PC-3 (cell line): ENCODE measurements at regions of chr5 and their contacts with region 1.

Region 1: GRCh38 chr5:31581498-31582099 is 49.5 kb downstream of the C5orf22 start:
- DNase-seq: peak; percentile 65
- ATAC-seq: no peak
- H3K4me3 ChIP-seq: no peak overlapping the region
- H3K27ac ChIP-seq: no peak overlapping the region
- H3K4me1 ChIP-seq: no peaks in the 10 kb centered on the region
- H3K27me3 ChIP-seq: peaks cover 19% of the 10 kb centered on the region; the same call in 1 of the 2 replicates
- CTCF ChIP-seq: peak; percentile 77

Region 2: DNA sequence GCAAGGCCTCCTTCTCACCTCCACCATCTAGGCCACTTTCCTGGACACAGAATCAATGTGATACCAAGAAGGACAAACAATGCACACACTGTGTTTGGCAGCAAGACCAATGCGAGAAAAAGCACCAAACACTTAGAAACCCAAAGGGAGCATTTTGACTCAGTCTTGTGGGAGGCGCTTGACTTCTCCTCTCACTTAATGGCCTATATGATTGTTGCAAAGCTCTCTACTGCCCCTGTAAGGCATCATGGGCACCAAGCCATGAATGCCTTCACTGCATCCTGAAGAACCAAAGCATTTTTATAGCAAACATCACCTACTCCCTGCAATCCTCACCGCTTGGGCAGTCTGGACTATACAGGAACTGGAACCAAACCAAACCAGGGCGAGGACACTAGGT is 330.6 kb before region 1 on chr5:
- CTCF ChIA-PET with region 1: no interaction called
- POLR2A ChIA-PET with region 1: no interaction called
- intact Hi-C with region 1: no loop called
- DNase-seq: no peak
- ATAC-seq: no peak
- H3K4me3 ChIP-seq: no peak overlapping the region
- H3K27ac ChIP-seq: no peak overlapping the region
- H3K4me1 ChIP-seq: no peaks in the 10 kb centered on the region
- H3K27me3 ChIP-seq: 0 out of 2 replicates have a peak, but pooled peaks cover 16% of the 10 kb centered on the region
- CTCF ChIP-seq: peak; percentile 25; the same call in 1 of the 2 replicates

Region 3: DNA sequence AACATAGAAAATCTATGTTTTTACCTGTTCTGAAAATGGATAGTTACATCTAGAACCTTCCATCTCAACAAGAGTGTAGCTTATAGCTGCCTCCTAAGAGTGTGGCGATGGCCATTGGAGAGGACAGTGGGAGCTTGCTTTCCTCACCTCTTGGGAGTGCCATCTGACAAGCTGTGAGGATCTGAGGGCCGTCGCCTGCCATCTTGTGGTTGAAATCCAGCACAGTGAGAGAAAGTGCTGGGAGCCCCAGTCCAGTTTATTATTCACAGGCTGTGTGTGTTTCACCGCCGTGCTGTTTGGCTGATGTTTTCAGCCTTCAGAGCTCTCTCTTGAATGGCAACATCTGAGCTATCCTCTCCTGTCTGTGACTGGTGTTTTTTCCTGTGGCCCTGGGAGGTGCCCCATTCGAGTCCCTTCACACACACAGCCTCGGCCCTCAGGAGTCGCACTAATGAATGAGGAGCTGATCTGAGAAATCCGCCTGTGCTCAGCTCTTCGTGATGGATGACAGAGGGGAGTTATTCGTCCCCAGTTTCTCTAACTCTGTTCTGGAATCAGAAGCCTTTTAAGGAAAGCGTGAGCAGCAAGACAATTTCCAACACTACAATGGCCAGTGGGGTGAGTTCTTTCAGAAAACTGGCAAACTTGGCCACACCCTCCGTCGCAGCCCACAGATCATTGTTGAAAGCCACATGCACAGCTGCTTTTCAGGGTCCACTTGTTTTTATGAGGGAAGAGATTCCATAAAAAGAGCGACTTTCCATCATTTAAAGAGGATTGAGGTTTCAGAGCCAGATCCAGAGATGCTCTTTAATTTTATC is 227.7 kb after region 1 on chr5:
- CTCF ChIA-PET with region 1: interaction called, 4 read pairs
- POLR2A ChIA-PET with region 1: no interaction called
- intact Hi-C with region 1: loop called (anchors 1 kb)
- DNase-seq: peak; percentile 84
- ATAC-seq: peak; percentile 98
- H3K4me3 ChIP-seq: no peak overlapping the region
- H3K27ac ChIP-seq: no peak overlapping the region
- H3K4me1 ChIP-seq: peaks cover 3% of the 10 kb centered on the region; the same call in 1 of the 2 replicates
- H3K27me3 ChIP-seq: peaks cover 24% of the 10 kb centered on the region
- CTCF ChIP-seq: peak; percentile 91

Region 4: DNA sequence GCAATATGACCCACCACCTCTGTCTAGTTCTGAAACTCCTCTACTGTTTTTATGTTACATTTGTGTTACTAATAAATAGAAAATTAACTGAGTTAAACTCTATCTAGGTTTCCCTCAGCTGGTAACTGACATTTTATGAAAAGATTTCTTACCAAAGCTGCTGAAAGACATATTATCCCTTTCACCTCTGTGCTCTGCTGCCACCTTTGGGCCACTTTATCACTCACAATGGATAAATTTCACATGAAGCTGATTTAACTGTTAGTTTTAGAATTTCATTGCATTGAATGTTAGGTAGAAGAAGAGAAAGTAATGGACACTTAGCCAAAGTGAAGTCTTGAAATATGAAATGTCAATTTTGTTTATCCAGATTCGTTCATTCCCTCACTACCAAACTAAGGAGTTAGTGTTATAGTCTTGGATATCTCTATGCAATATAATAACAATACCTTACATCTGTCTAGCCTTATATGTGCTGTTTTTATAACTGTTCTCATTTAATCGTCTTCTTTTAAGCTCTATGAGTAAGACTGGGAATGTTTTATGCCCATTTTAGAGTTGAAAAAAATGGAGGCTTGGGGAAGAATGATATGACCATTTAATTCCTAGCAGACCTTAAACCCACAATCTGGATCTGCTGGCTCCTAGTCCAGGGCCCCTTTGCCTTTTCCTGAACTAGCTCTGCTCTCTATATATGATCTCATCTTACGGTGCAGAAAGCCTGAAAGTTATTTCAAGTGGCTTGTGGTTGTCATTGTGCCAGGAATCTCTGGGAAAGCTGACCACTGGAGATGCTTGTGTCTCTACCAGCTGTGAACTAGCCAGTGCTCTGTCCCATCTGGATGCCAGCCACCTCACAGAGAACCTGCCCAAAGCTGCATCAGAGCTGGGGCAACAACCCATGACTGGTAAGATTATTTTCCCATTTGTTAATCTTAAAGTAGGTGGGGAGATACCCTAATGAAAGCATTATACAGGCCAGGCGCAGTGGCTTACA is 495.4 kb after region 1 on chr5:
- CTCF ChIA-PET with region 1: no interaction called
- POLR2A ChIA-PET with region 1: no interaction called
- intact Hi-C with region 1: loop called (anchors 5 kb)
- DNase-seq: peak; percentile 80
- ATAC-seq: peak; percentile 50
- H3K4me3 ChIP-seq: no peak overlapping the region
- H3K27ac ChIP-seq: no peak overlapping the region
- H3K4me1 ChIP-seq: peaks cover 2% of the 10 kb centered on the region
- H3K27me3 ChIP-seq: no peaks in the 10 kb centered on the region
- CTCF ChIP-seq: peak; percentile 97

Region 5: GRCh38 chr5:32092938-32093812 is 511.6 kb after region 1 on chr5:
- CTCF ChIA-PET with region 1: no interaction called
- POLR2A ChIA-PET with region 1: no interaction called
- intact Hi-C with region 1: loop called (anchors 1 kb)
- DNase-seq: peak; percentile 89
- ATAC-seq: peak; percentile 99
- H3K4me3 ChIP-seq: no peak overlapping the region
- H3K27ac ChIP-seq: no peak overlapping the region
- H3K4me1 ChIP-seq: no peaks in the 10 kb centered on the region
- H3K27me3 ChIP-seq: no peaks in the 10 kb centered on the region
- CTCF ChIP-seq: peak; percentile 92